ENCODE measurements at regions of chr11 and their contacts with region 1.

Region 1: GRCh38 chr11:131025020-131025419 is 108.7 kb upstream of the SNX19 start:
- DNase-seq: peak in 1 of 2 experiments; percentile 17
- H3K4me3 ChIP-seq: no peak overlapping the region
- H3K27ac ChIP-seq: no peak overlapping the region
- H3K4me1 ChIP-seq: no peaks in the 10 kb centered on the region
- H3K27me3 ChIP-seq: no peaks in the 10 kb centered on the region
- CTCF ChIP-seq: peak; percentile 78

Region 2: GRCh38 chr11:131064373-131064991 is 39.5 kb after region 1 on chr11:
- CTCF ChIA-PET with region 1: no interaction called
- POLR2A ChIA-PET with region 1: no interaction called
- intact Hi-C with region 1: loop called (anchors 1 kb)
- DNase-seq: peak in 1 of 2 experiments; percentile 39
- H3K4me3 ChIP-seq: no peak overlapping the region
- H3K27ac ChIP-seq: no peak overlapping the region
- H3K4me1 ChIP-seq: no peaks in the 10 kb centered on the region
- H3K27me3 ChIP-seq: peaks cover 94% of the 10 kb centered on the region
- CTCF ChIP-seq: peak; percentile 85

Region 3: DNA sequence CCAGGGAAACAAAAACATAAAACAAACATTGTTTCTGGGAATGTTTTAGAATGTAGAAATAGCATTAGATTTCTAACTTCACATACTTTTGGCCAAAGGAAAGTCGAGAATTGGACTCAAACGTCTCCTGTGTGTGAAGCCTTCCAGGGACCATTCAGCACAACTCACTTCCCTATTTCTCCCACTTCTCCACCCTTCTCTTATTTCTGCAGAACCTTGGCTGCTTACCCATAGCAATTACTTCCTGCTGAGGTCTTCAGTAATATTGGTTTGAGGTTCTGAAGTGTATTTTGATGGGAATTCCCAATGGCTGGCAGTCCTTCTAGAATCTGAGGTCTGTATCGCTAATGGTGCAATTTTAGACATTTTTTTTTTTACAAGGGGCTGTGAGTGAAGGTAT is 49.6 kb after region 1 on chr11:
- CTCF ChIA-PET with region 1: no interaction called
- POLR2A ChIA-PET with region 1: no interaction called
- intact Hi-C with region 1: no loop called
- DNase-seq: no peak
- H3K4me3 ChIP-seq: no peak overlapping the region
- H3K27ac ChIP-seq: no peak overlapping the region
- H3K4me1 ChIP-seq: no peaks in the 10 kb centered on the region
- H3K27me3 ChIP-seq: peaks cover 67% of the 10 kb centered on the region
- CTCF ChIP-seq: no peak

Region 4: DNA sequence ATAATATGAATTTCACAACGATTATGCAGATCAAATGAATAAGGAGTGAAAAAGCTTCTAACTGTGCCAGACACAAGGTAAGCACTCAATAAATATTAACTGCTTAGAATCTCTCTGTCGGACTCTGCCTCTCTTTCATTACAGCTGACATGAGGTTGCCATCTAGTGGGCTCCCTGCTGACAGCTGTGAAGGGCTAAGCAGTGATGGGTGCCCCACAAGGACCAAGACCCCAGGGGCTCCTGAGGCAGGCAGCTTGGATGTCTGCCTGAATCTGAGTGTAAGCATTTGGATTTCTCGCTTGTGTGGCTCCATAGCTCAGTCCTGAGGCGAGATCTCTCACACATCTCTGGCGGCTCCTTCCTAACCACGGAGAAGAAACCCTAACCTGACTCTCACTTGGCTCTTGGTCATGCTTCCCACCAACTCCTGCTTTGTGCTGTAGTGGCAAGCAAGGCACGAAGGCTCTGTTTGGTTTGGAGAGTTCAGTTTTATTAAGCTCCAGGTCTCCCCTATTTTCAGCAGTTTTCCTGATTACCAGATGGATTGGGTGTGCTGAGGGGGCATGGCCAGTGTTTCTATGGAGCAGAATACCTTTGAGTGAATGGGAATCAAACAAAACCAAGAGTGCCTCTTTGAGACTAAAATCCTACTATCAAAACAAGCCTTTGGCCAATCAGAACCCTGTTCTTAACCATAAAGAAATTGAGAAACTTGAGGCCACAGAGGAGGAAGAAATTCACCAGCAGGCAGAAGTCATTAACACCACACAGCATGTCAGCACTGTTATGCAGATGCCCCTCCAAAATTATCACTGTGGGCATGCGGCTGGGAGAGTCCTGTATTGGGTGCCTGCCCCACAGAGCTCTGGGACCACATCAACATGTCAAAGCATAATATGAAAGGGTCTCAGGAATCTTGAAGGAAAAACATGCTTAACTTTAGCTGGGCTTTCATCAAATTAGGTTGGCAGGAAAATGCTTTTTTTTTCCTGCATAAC is 192.6 kb after region 1 on chr11:
- CTCF ChIA-PET with region 1: no interaction called
- POLR2A ChIA-PET with region 1: no interaction called
- intact Hi-C with region 1: loop called (anchors 10 kb)
- DNase-seq: no peak
- H3K4me3 ChIP-seq: no peak overlapping the region
- H3K27ac ChIP-seq: no peak overlapping the region
- H3K4me1 ChIP-seq: no peaks in the 10 kb centered on the region
- H3K27me3 ChIP-seq: peaks cover 53% of the 10 kb centered on the region
- CTCF ChIP-seq: peak; percentile 35; the same call in 1 of the 2 replicates

Region 5: GRCh38 chr11:131511794-131512193 is 486.8 kb after region 1 on chr11:
- CTCF ChIA-PET with region 1: no interaction called
- POLR2A ChIA-PET with region 1: no interaction called
- intact Hi-C with region 1: loop called (anchors 2 kb)
- DNase-seq: peak; percentile 42 to 59
- H3K4me3 ChIP-seq: no peak overlapping the region
- H3K27ac ChIP-seq: no peak overlapping the region
- H3K4me1 ChIP-seq: no peaks in the 10 kb centered on the region
- H3K27me3 ChIP-seq: peaks cover 17% of the 10 kb centered on the region
- CTCF ChIP-seq: peak; percentile 60

Region 6: GRCh38 chr11:131674051-131674755 is 649.2 kb after region 1 on chr11:
- CTCF ChIA-PET with region 1: interaction called, 4 read pairs
- POLR2A ChIA-PET with region 1: no interaction called
- intact Hi-C with region 1: loop called (anchors 1 kb)
- DNase-seq: peak; percentile 41 to 55
- H3K4me3 ChIP-seq: no peak overlapping the region
- H3K27ac ChIP-seq: no peak overlapping the region
- H3K4me1 ChIP-seq: no peaks in the 10 kb centered on the region
- H3K27me3 ChIP-seq: peaks cover 46% of the 10 kb centered on the region; the same call in 1 of the 2 replicates
- CTCF ChIP-seq: peak; percentile 85